ENCODE measurements at regions of chr15 and their contacts with region 1.

Region 1: DNA sequence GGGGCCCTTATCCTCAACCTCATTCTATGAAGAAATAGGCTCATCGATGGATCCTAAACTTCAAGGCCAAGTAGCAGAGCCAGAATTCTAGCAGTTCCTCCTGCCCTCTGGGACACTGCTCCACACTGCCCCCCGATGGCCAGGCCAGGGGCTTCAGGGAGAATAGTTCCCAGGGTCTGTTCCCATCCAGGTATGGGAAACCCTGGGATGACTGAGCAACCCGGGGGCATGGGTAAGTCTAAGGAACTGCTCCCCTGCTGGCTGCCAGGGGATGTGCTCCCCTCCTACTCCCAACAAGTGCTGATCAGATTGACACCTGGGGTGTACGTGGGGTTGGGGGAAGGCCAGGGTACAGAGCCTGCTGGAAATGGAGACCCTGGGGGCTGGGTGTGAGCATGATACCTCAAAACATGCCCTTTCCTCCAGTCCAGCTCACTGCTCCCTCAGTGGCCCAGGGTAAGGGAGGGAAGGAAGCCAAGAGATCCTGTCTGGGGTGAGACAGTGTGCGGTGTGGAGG is 7.6 kb downstream of the ULK3 start:
- DNase-seq: peak in 2 of 3 donors; percentile 77 to 83
- ATAC-seq: peak; percentile 4 to 41
- H3K4me3 ChIP-seq: no peak overlapping the region
- H3K27ac ChIP-seq: no peak overlapping the region
- H3K4me1 ChIP-seq: peaks cover 3% of the 10 kb centered on the region
- H3K27me3 ChIP-seq: no peaks in the 10 kb centered on the region

Region 2: GRCh38 chr15:74781431-74782258 is 53.7 kb before region 1 on chr15 and contains the start of gene CSK:
- intact Hi-C with region 1: loop called in 2 of 4 experiments (anchors 5 to 10 kb)
- DNase-seq: peak; percentile 83 to 94 (median 92)
- ATAC-seq: peak; percentile 53 to 56
- H3K4me3 ChIP-seq: peak within 1 kb of the TSS; percentile 96
- H3K27ac ChIP-seq: peak within 1 kb of the TSS; percentile 94
- H3K4me1 ChIP-seq: peaks cover 22% of the 10 kb centered on the region
- H3K27me3 ChIP-seq: no peaks in the 10 kb centered on the region
- total RNA-seq, gene CSK: 52.9 to 68.3 (median 60.9) TPM